Activated CD8-positive, alpha-beta memory T cell treated with anti-CD3 and anti-CD28 coated beads, Interleukin-2, amount 10 ng/mL, durations not matched to agents 7 days and 5 days (primary cell): ENCODE measurements at regions of chr1 and their contacts with region 1.

Region 1: DNA sequence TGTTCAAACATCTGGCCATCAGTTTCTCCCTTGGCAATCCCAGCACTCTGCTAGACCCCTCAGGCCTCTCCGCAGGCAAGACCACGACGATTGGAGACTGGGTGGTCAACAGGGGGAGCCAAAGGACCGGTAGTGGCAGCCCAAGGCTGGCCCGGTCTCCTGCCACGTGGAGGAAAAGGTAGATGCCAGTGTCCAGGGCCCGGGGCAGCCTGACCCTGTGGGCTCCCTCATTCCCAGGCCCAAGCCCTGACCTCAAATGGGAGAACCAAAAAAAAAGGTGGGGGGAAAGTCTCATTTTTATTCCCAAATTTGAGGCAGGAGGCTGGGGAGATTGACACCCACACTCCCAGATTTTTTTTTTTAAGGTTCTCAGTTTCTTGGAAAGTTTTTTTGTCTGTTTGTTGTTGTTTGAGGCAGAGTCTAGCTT is 24.8 kb downstream of the S100A6 start:
- DNase-seq: peak; percentile 87
- ATAC-seq: peak; percentile 94
- H3K4me3 Mint-ChIP-seq: no peak overlapping the region
- H3K27ac Mint-ChIP-seq: peak overlapping the region; percentile 55
- H3K4me1 Mint-ChIP-seq: peaks cover 23% of the 10 kb centered on the region
- H3K27me3 Mint-ChIP-seq: no peaks in the 10 kb centered on the region

Region 2: GRCh38 chr1:153168686-153169085 is 342.3 kb before region 1 on chr1:
- CTCF ChIA-PET with region 1: no interaction called
- DNase-seq: no peak
- ATAC-seq: no peak
- H3K4me3 Mint-ChIP-seq: no peak overlapping the region
- H3K27ac Mint-ChIP-seq: no peak overlapping the region
- H3K4me1 Mint-ChIP-seq: no peaks in the 10 kb centered on the region
- H3K27me3 Mint-ChIP-seq: peaks cover 19% of the 10 kb centered on the region

Region 3: DNA sequence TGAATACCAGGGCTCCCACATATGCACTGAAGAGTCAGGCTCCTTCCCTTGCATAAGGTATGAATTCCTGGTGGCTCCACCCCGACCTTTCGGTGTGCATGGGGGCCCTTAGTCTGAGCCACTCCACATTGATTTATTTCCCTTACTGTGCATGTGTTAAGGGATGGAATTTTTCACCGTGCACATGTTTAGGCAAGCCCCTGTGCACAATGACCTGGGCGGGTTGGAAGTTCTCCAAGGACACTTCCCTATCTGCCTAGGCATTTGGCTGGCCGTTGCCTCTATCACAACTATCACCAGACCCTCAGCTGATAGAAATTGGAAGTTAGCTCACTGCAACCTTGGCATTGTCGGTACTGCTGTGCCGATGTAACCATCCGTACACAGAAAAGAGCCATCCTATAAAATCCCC is 15.1 kb after region 1 on chr1:
- CTCF ChIA-PET with region 1: interaction called, 26 read pairs
- DNase-seq: no peak
- ATAC-seq: no peak
- H3K4me3 Mint-ChIP-seq: no peak overlapping the region
- H3K27ac Mint-ChIP-seq: no peak overlapping the region
- H3K4me1 Mint-ChIP-seq: peaks cover 13% of the 10 kb centered on the region
- H3K27me3 Mint-ChIP-seq: no peaks in the 10 kb centered on the region

Region 4: GRCh38 chr1:153545067-153546055 is 34.4 kb after region 1 on chr1 and contains the start of gene S100A4:
- CTCF ChIA-PET with region 1: interaction called, 18 read pairs
- DNase-seq: peak; percentile 97
- ATAC-seq: peak; percentile 85
- H3K4me3 Mint-ChIP-seq: peak within 1 kb of the TSS; percentile 96
- H3K27ac Mint-ChIP-seq: peak within 1 kb of the TSS; percentile 97
- H3K4me1 Mint-ChIP-seq: peaks cover 78% of the 10 kb centered on the region
- H3K27me3 Mint-ChIP-seq: peaks cover 3% of the 10 kb centered on the region
- total RNA-seq, gene S100A4: 898 to 906 TPM

Region 5: GRCh38 chr1:153572569-153573015 is 61.6 kb after region 1 on chr1:
- CTCF ChIA-PET with region 1: interaction called, 167 read pairs
- DNase-seq: peak; percentile 73
- ATAC-seq: peak; percentile 79
- H3K4me3 Mint-ChIP-seq: no peak overlapping the region
- H3K27ac Mint-ChIP-seq: peak overlapping the region; percentile 42
- H3K4me1 Mint-ChIP-seq: peaks cover 32% of the 10 kb centered on the region
- H3K27me3 Mint-ChIP-seq: peaks cover 19% of the 10 kb centered on the region

Region 6: DNA sequence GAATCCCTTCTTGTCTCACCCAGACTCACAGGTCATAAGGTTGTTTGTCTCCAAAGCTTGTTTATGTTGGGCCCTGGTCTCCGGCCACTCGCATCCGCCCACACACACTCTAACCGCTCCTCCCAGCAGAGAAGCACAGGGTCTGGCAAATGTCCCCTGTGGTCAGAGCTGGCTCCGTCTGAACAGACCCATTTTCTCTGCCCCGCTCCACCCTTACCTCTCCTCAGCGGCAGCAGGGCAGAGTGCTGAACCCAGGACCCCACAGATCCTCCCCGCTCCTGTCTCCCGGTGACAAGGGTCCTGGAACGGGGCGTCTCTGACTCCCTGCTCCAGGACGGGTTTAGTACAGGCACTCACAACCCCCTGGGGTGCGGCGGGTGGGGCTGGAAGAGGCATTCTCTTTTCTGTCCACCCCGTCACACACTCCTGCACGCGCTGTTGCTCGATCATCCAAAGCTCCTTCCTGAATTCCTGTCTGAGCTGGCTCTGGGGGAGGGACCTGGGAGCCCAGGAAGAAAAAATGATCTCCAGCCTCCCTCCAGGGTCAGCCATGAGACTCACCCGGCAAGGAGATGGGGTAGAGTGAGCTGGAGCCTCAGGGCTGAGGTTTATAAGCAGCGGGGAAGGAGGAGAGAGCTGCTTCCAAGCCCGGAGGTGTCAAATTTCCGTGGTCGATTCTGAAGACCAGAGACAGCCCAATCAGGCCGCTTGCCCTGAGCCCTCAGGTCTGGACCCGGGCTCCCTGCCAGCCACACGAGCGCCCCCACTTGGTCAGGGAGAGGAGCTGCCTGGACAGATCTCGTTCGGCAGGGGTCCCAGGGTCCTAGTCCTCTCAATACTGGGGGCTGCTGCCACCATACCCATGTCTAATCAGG is 116.2 kb after region 1 on chr1 and contains the start of gene S100A13:
- CTCF ChIA-PET with region 1: interaction called, 12 read pairs
- DNase-seq: no peak
- ATAC-seq: no peak
- H3K4me3 Mint-ChIP-seq: no peak within 1 kb of the TSS
- H3K27ac Mint-ChIP-seq: no peak within 1 kb of the TSS
- H3K4me1 Mint-ChIP-seq: peaks cover 7% of the 10 kb centered on the region
- H3K27me3 Mint-ChIP-seq: no peaks in the 10 kb centered on the region
- total RNA-seq, gene S100A13: 6.0 to 7.0 TPM